OCI-LY7 (cell line): ENCODE measurements at regions of chr20 and their contacts with region 1.

Region 1: DNA sequence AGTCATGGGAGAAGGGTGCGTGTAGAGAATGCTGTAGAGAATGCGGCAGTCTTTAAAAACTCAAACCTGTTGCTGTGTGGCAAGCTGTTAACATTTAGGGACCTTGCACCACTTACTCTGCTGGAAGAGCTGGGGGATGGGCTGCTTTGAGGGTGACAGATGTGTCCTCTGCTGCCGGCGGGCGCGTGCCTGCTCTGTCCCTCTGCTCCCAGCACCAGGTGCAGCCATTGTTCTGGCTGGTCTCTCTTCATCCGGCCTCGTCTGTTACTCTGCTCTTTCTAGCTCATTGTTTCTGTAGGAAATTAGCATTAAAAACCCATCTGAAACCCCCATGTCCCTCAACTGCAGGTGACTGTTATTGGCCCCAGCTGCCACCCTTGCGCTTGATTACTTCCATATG is 78.5 kb downstream of the CBFA2T2 start:
- DNase-seq: peak; percentile 99
- H3K4me3 ChIP-seq: peak overlapping the region; percentile 61
- H3K27ac ChIP-seq: peak overlapping the region; percentile 99
- H3K4me1 ChIP-seq: peaks cover 92% of the 10 kb centered on the region
- CTCF ChIP-seq: no peak; the same call in 1 of the 2 replicates

Region 2: DNA sequence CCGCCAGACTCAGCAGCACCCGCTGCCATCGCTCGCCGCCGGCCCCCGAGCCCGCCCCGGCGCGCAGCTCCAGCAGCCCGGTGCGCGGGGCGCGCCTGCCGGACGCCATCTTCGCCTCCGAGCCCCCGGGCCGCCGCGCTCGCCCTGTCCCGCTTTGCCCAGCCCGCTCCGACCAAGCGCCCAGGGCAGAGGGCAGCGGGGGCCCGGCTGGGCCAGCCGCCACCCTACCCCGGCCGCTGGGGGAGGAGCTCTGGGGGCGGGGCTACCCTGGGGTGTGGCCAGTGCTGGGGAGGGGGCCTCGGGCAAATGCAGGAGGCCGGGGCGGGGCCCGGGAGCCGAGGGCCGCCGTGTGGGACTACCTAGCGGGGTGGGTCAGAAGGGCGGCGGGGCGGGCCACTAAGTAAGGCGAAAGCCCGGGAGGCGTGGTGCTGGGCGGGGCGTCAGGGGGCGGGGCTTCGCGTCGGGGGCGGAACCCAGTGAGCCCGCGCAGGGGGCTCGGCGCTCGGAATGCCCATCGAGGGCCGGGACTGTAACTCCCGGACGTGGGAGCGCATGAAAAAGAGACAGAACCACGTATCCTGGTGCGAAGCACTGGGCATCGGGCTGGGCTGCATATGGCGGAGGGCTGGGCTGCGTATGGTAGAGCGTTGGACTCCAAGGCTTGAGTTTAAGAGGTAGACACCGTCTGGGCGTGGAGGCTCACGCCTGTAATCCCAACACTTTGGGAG is 124.7 kb before region 1 on chr20 and contains the start of gene SNTA1:
- CTCF ChIA-PET with region 1: no interaction called
- POLR2A ChIA-PET with region 1: no interaction called
- intact Hi-C with region 1: loop called (anchors 5 kb)
- DNase-seq: peak; percentile 96
- H3K4me3 ChIP-seq: peak within 1 kb of the TSS; percentile 76
- H3K27ac ChIP-seq: peak within 1 kb of the TSS; percentile 95
- H3K4me1 ChIP-seq: peaks cover 69% of the 10 kb centered on the region
- CTCF ChIP-seq: no peak
- total RNA-seq, gene SNTA1: 44.8 and 46.5 TPM in 2 replicates

Region 3: DNA sequence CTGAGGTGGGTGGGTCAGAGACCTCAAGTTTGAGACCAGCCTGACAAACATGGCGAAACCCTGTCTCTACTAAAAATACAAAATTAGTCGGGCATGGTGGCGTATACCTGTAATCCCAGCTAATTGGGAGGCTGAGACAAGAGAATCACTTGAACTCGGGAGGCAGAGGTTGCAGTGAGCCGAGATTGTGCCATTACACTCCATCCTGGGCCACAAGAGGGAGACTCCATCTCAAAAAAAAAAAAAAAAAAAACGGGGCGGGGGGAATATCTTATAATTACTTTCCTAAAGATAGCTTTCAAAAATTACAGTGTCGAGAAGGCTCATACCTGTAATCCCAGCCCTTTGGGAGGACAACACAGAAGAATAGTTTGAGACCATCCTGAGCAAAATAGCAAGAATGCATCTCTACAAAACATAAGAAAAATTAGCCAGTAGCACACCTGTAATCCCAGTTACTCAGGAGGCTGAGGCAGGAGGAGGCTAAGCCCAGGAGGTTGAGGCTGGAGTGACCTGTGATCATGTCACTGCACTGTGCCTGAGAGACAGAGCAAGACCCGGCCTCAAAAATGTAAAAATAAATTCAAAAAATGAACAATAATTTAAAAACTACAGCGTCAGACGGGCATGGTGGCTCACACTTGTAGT is 52.7 kb before region 1 on chr20:
- CTCF ChIA-PET with region 1: no interaction called
- POLR2A ChIA-PET with region 1: interaction called, 3 read pairs
- intact Hi-C with region 1: loop called (anchors 2 kb)
- DNase-seq: peak; percentile 38
- H3K4me3 ChIP-seq: no peak overlapping the region
- H3K27ac ChIP-seq: no peak overlapping the region
- H3K4me1 ChIP-seq: peaks cover 38% of the 10 kb centered on the region
- CTCF ChIP-seq: peak; percentile 80

Region 4: DNA sequence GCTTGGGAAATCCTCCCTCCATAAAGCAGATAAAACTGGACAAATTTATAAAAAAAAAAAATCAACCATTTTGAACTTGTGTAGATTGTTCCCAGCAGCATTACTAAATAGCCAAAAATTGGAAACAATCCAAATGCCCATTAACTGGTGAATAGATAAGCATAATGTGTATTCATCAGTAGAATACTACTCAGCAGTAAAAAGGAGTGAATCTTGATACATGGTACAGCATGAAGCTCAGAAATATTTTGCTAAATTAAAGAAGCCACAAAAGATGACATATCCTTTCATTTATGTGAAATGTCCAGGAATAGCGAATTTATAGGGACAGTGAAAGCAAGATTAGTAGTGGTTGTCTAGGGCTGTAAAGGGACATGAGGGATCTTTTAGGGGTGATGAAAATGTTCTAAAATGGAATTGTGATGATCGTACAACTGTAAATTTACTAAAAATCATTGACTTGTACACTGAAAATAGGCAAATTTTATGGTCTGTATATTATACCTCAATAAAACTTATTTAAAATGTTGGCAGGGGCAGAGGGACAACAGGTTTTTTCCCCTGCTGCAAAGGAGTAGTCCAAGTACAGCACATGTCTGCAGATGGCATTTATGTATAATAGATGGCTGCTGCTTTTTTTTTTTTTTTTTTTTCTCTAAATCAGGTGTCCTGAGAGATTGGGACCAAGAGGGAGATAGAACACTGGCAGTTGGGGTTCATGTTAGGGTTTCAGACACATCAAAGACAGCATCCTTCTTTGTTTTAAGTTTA is 19.0 kb before region 1 on chr20:
- CTCF ChIA-PET with region 1: no interaction called
- POLR2A ChIA-PET with region 1: interaction called, 10 read pairs
- intact Hi-C with region 1: loop called (anchors 2 kb)
- DNase-seq: no peak
- H3K4me3 ChIP-seq: no peak overlapping the region
- H3K27ac ChIP-seq: peak overlapping the region; percentile 5
- H3K4me1 ChIP-seq: peaks cover 53% of the 10 kb centered on the region
- CTCF ChIP-seq: no peak

Region 5: GRCh38 chr20:33554914-33555420 is 13.4 kb before region 1 on chr20:
- CTCF ChIA-PET with region 1: no interaction called
- POLR2A ChIA-PET with region 1: interaction called, 10 read pairs
- intact Hi-C with region 1: loop called (anchors 2 kb)
- DNase-seq: peak; percentile 91
- H3K4me3 ChIP-seq: peak overlapping the region; percentile 31
- H3K27ac ChIP-seq: peak overlapping the region; percentile 89
- H3K4me1 ChIP-seq: peaks cover 55% of the 10 kb centered on the region
- CTCF ChIP-seq: no peak

Region 6: DNA sequence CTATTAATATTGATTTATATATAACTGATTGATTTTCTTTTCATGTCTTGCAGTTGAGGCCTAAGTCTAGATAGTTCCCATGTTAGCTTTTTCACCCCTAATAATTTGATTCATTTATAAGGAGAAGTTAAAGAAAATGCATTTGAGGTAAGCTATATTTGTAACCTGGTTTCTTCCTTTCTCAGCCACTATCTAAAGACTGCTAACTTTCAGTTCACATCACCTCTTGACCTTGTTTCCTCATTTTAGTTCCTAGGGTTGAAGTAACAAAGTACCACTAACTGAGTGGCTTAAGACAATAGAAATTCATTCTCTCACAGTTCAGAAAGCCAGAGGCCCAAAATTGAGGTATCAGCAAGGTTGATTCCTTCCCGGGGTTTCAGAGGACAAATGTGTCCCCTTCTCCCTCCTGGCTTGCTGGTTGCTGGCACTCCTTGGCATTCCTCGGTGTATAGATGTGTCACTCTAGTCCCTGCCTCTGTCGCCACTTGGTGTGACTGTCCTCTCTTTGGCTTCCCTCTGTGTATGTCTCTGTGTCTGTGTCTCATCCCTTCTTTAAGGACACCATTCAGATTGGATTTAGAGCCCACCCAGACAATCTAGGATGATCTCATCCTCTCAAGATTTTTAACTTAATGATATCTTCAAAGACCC is 37.9 kb after region 1 on chr20:
- CTCF ChIA-PET with region 1: no interaction called
- POLR2A ChIA-PET with region 1: interaction called, 7 read pairs
- intact Hi-C with region 1: loop called (anchors 1 kb)
- DNase-seq: peak; percentile 66
- H3K4me3 ChIP-seq: peak overlapping the region; percentile 41
- H3K27ac ChIP-seq: peak overlapping the region; percentile 69
- H3K4me1 ChIP-seq: peaks cover 97% of the 10 kb centered on the region
- CTCF ChIP-seq: no peak

Region 7: DNA sequence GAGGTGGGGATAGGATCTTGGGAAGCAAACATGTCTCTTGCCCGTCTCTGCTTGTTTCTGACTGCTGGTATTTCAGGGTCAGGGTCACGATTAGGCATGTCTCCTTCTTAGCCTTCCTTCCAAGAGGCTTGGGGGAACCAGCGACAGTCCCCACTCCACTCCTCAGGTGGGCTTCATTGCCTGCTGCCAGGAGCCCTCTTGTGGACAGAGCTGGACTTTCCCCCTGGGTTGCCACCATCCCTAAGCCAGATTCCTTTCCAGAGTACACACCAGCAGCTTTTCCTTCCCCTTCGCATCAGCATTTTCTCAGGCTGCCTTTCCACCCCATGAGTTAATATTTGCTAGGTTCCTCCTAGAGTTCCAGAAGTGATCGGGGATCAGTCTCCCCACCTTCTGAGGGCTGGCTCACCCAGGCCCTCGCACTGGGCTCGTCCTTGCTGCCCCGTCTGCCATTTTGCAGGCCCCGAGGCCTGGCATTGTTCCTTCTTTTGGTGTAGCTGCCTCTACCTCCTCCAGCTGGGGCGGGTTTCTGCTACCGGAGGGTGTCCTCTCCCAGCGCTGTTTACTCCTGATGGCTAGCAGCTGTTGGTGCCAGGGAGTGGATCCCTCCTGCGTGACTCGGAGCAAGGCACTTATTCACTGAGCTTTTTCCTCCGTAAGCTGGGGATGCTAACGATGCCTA is 85.0 kb after region 1 on chr20:
- CTCF ChIA-PET with region 1: interaction called, 3 read pairs
- POLR2A ChIA-PET with region 1: no interaction called
- intact Hi-C with region 1: loop called (anchors 2 kb)
- DNase-seq: peak; percentile 82
- H3K4me3 ChIP-seq: no peak overlapping the region
- H3K27ac ChIP-seq: peak overlapping the region; percentile 0
- H3K4me1 ChIP-seq: peaks cover 19% of the 10 kb centered on the region
- CTCF ChIP-seq: peak; percentile 91